Activated CD8-positive, alpha-beta T cell treated with anti-CD3 and anti-CD28 coated beads, Interleukin-2, amount 10 ng/mL, durations not matched to agents 7 days and 5 days (primary cell): ENCODE measurements at regions of chr16 and their contacts with region 1.

Region 1: DNA sequence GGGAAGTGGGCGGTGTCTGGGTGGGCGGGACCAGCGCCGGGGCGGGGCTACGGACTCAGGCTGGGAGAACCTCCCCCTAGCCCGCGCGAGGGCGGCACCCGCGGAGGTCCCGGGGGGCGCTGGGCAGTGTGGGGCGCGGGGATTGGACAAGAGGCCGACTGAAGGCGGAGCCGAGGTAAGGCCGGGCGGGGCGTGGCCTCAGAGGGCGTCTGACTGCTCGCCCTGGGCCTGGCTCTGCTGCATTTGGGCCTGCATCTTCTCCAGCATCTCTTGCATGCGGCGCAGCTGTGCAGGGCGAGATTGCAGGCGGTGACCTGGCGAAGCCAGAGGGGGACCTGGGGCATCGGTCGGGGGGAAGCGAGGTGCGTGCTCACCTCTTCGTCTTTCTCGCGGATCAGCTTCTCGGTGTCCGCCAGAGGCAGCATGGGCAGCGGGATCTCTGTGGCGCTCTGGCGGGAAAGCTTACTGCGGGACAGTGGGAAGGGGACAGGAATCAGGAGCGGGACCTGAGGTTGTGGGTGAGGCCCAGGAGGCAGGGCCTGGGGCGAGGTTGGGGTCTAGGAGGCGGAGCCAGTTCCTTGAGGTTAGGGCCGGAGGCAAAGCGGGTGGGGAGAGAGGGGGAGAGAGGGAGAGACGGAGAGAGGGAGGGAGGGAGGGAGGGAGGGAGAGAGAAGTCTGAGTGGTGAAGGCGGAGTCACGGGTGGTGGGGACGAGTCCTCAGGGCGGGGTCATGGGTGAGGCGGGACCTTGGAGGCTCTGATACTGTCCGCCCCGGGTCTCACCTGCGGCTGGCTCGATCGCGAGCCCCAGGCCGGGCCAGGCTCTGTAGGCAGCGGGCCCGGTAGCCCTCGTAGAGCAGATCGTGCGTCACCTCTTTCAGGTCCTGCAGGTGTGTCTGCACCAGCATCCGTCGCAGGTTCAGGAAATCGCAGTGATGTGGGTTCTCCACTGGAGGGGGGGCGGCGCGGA is 3.8 kb downstream of the SEPTIN1 start:
- DNase-seq: peak; percentile 99
- ATAC-seq: peak; percentile 88
- H3K4me3 Mint-ChIP-seq: peak overlapping the region; percentile 99
- H3K27ac Mint-ChIP-seq: peak overlapping the region; percentile 100
- H3K4me1 Mint-ChIP-seq: peaks cover 65% of the 10 kb centered on the region
- H3K27me3 Mint-ChIP-seq: no peaks in the 10 kb centered on the region

Region 2: GRCh38 chr16:30395155-30395991 is 16.9 kb after region 1 on chr16 and contains the start of gene ZNF48:
- CTCF ChIA-PET with region 1: interaction called, 20 read pairs
- POLR2A ChIA-PET with region 1: interaction called, 31 read pairs
- DNase-seq: peak; percentile 53
- ATAC-seq: peak; percentile 77
- H3K4me3 Mint-ChIP-seq: peak within 1 kb of the TSS; percentile 91
- H3K27ac Mint-ChIP-seq: peak within 1 kb of the TSS; percentile 77
- H3K4me1 Mint-ChIP-seq: peaks cover 55% of the 10 kb centered on the region
- H3K27me3 Mint-ChIP-seq: no peaks in the 10 kb centered on the region
- total RNA-seq, gene ZNF48: 13.5 to 13.8 TPM